Right ventricle myocardium inferior (tissue), 1 donor: ENCODE measurements at regions of chr9 and their contacts with region 1.

Region 1: GRCh38 chr9:130451509-130452388 is 7.0 kb downstream of the ASS1 start:
- DNase-seq: peak; percentile 87
- ATAC-seq: peak; percentile 75

Region 2: DNA sequence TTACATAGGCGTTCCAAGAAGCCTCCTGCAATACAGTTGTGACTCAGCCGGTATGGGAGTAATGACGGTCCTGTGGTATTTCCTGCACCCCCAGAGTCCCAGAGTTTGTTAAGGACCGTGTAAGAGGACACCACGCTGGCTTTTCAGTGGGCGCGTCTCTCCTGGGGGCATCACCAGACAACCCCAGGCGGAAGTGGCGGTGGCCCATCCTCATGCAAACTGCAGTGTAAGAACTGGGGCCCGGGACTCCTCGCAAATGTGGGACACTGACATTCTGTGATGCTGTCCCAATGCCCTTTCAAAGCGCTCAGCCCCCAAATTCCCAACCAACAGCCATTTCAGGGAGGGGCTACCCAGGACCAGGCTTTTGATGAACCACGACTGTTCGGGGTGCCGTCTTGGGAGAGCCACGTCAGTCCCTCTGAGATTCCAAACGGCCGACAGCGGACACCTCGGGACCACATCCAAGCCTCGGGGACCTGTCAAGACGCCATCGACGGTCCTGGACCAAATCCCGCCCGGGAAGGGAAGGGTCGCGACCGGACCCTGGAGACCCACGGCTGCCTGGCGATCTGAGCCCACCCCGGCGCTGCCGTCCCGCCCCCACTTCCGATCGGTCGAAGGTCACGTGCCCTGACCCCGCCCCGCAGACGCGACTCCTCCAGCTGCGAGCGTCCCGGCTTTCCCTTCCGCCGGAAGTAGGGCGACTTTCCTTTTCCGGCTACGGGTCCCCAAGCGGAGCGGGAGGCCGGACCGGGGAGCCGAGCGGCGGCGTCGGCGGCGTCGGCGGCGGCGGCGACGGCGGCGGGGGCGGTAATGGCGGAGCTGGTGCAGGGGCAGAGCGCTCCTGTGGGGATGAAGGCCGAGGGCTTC is 127.4 kb after region 1 on chr9 and contains the start of gene FUBP3:
- intact Hi-C with region 1: loop called (anchors 5 kb)
- DNase-seq: peak; percentile 97
- ATAC-seq: peak; percentile 95
- total RNA-seq, gene FUBP3: 21.9 TPM

Region 3: DNA sequence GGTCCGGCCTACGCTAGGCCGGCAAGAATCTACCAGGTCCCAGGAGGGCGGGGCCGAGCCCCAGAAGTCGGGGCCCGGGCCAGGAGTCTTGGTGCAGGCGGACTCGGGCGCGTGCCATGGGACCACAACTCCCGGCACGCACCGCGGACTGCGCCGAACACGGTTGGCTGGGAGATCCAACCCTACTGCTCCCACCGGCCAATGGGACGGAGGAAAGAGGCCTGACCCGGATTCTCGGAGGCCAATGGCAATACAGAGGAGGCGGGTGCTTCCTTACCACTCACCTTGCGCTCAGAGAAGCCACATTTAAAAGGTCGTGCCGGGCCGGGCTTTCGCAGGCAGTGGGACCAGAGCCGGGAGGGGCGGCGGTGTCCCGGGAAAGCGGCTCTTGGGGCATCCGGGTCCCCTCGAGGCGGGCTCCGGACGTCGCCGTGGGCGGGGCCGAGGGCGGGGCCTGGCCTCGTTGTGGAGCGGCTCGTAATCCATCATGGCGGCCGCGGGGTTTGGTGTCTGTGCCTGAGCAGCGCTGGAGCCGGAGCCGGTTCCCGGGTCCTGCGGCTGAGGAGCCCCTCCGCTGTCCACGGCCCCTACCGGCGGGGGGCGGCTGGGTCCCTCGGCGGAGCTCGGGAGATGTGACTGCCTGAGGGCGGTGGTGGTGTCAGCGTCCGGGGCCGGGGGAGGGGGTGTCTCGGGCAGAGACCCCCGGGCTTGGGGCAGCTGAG is 261.0 kb after region 1 on chr9:
- intact Hi-C with region 1: no loop called
- DNase-seq: peak; percentile 99
- ATAC-seq: peak; percentile 97